Keratinocyte (primary cell): ENCODE measurements at regions of chr6 and their contacts with region 1.

Region 1: GRCh38 chr6:99254616-99255550 is 94.6 kb downstream of the FAXC start:
- DNase-seq: no peak
- H3K4me3 ChIP-seq: no peak overlapping the region
- H3K27ac ChIP-seq: no peak overlapping the region
- H3K4me1 ChIP-seq: no peaks in the 10 kb centered on the region
- H3K27me3 ChIP-seq: no peaks in the 10 kb centered on the region
- CTCF ChIP-seq: no peak

Region 2: GRCh38 chr6:99064834-99065233 is 190.0 kb before region 1 on chr6:
- dilution Hi-C with region 1: no loop called
- DNase-seq: no peak
- H3K4me3 ChIP-seq: no peak overlapping the region
- H3K27ac ChIP-seq: no peak overlapping the region
- H3K4me1 ChIP-seq: no peaks in the 10 kb centered on the region
- H3K27me3 ChIP-seq: no peaks in the 10 kb centered on the region
- CTCF ChIP-seq: no peak

Region 3: GRCh38 chr6:99151634-99152344 is 103.1 kb before region 1 on chr6:
- dilution Hi-C with region 1: loop called (anchors 5 kb)
- DNase-seq: no peak
- H3K4me3 ChIP-seq: no peak overlapping the region
- H3K27ac ChIP-seq: no peak overlapping the region
- H3K4me1 ChIP-seq: no peaks in the 10 kb centered on the region
- H3K27me3 ChIP-seq: no peaks in the 10 kb centered on the region
- CTCF ChIP-seq: peak; percentile 76 to 84 (median 82)

Region 4: GRCh38 chr6:99446076-99446475 is 191.2 kb after region 1 on chr6:
- dilution Hi-C with region 1: no loop called
- DNase-seq: no peak
- H3K4me3 ChIP-seq: no peak overlapping the region
- H3K27ac ChIP-seq: no peak overlapping the region
- H3K4me1 ChIP-seq: no peaks in the 10 kb centered on the region
- H3K27me3 ChIP-seq: no peaks in the 10 kb centered on the region
- CTCF ChIP-seq: no peak